Mammary epithelial cell (primary cell): ENCODE measurements at regions of chr7 and their contacts with region 1.

Region 1: GRCh38 chr7:143318656-143319055 is 2.7 kb downstream of the CLCN1 start:
- DNase-seq: peak; percentile 90
- H3K4me3 ChIP-seq: no peak overlapping the region
- H3K27ac ChIP-seq: no peak overlapping the region
- H3K4me1 ChIP-seq: peaks cover 15% of the 10 kb centered on the region
- H3K27me3 ChIP-seq: no peaks in the 10 kb centered on the region
- CTCF ChIP-seq: peak; percentile 30 to 45

Region 2: GRCh38 chr7:142908921-142909890 is 409.4 kb before region 1 on chr7:
- CTCF ChIA-PET with region 1: no interaction called
- dilution Hi-C with region 1: no loop called
- in situ Hi-C with region 1: no loop called
- intact Hi-C with region 1: no loop called
- DNase-seq: no peak
- H3K4me3 ChIP-seq: no peak overlapping the region
- H3K27ac ChIP-seq: no peak overlapping the region
- H3K4me1 ChIP-seq: no peaks in the 10 kb centered on the region
- H3K27me3 ChIP-seq: no peaks in the 10 kb centered on the region
- CTCF ChIP-seq: peak; percentile 48 to 55

Region 3: DNA sequence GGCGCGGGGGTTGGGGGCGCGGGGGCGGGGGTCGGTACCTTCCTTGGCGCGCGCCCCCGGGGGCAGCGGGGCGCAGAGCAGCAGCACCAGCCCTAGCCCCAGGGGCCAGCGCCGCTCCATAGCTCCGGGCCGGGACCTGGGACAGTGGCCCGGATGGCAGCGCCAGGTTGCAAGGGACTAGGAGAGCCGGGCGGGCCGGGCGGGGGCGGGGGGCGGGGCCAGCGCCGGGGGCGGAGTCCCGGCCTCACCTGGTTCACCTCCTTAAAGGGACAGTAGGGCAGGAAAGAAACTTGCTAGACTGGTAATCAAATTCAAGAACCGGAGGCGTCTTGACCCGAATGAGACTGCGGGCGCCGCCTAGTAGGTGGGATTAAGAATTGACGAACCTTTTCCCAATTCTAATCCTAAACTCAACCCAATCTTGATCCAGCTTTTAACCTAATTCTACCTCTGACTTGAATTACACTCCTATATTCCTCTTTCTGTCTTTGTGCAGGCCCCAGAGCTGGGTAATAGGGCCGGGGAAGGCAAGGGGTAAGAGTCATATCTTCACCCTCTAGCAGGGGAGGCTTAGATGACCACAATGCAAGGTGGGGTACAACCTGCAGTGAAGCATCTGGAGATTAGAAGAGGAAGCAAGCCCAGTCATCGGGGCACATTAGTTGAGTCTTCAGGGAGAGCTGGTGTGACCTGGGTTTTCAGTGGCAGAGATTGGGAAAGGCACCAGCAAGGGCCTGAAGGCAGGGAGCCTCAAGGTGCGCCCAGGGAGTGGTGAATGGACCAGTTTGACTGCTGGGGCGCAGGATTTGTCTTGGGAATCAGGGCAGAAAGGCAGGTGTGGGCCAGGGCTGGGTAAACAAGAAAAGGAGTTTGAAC is 90.3 kb after region 1 on chr7 and contains the start of gene EPHA1:
- CTCF ChIA-PET with region 1: no interaction called
- dilution Hi-C with region 1: no loop called
- in situ Hi-C with region 1: loop called in 1 of 2 experiments (anchors 10 kb)
- intact Hi-C with region 1: no loop called
- DNase-seq: peak; percentile 82
- H3K4me3 ChIP-seq: peak within 1 kb of the TSS; percentile 56 to 82 (median 79)
- H3K27ac ChIP-seq: peak within 1 kb of the TSS; percentile 32
- H3K4me1 ChIP-seq: peaks cover 27% of the 10 kb centered on the region
- H3K27me3 ChIP-seq: no peaks in the 10 kb centered on the region
- CTCF ChIP-seq: peak; percentile 45 to 66
- total RNA-seq, gene EPHA1: 15.2 to 27.3 TPM

Region 4: GRCh38 chr7:143416565-143417149 is 98.0 kb after region 1 on chr7:
- CTCF ChIA-PET with region 1: no interaction called
- dilution Hi-C with region 1: no loop called
- in situ Hi-C with region 1: no loop called
- intact Hi-C with region 1: loop called (anchors 1 kb)
- DNase-seq: no peak
- H3K4me3 ChIP-seq: peak overlapping the region in 2 of 3 experiments; percentile 33 to 38
- H3K27ac ChIP-seq: peak overlapping the region; percentile 89
- H3K4me1 ChIP-seq: peaks cover 33% of the 10 kb centered on the region
- H3K27me3 ChIP-seq: no peaks in the 10 kb centered on the region
- CTCF ChIP-seq: peak; percentile 61 to 70